Mammary epithelial cell (primary cell): ENCODE measurements at regions of chr3 and their contacts with region 1.

Region 1: DNA sequence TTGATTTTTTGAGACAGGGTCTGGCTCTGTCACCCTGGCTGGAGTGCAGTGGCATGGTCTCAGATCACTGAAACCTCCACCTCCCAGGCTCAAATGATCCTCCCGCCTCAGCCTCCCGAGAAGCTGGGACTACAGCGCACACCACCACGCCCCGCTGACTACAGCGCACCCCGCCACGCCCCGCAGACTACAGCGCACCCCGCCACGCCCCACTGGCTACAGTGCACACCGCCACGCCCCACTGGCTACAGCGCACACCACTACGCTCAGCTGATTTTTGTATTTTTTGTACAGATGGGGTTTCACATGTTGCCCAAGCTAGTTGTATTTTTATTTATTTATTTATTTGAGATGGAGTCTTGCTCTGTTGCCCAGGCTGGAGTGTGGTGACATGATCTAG is 35.6 kb downstream of the SLC51A start:
- DNase-seq: no peak
- H3K4me3 ChIP-seq: no peak overlapping the region
- H3K27ac ChIP-seq: no peak overlapping the region
- H3K4me1 ChIP-seq: no peaks in the 10 kb centered on the region
- H3K27me3 ChIP-seq: no peaks in the 10 kb centered on the region
- CTCF ChIP-seq: no peak

Region 2: DNA sequence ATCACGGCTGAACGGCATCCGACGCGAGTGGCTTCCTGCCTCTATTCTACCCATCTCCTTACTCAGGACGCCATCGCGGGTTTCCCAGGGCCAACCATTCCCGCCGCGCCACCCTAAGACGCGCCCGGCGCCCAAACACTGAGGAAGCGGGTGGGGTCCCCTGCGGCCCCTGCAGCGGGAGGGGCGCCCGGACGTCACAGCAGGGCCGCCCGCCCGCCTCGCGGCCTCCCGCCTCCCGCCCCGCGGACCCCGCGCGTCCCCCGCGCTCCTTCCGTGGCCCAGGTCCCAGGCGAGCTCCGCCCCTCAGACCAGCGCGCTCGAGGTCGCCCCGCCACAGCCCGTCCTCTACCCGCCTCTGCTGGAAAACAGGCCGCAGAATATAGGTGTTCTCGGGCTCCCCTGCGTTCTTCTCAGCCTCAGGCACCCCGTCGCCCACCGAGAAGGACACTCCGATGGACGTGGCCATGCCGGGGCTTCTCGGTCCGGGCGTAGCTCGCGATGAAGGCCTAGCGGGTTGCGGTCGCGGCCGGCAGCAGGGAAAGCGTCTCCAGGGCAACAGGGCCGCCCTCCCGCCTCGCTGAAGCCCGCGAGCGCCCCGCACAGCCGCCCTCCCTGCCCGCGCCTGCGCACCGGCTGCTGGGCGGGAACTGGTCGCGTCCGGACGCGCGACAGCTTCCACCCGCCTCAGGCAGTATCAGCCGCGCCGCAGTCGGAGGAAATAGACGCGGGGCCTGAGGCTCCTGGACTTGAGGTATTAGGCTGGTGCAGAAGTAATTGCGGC is 66.0 kb after region 1 on chr3 and contains the start of gene DYNLT2B:
- CTCF ChIA-PET with region 1: no interaction called
- dilution Hi-C with region 1: no loop called
- in situ Hi-C with region 1: no loop called
- intact Hi-C with region 1: loop called (anchors 10 kb)
- DNase-seq: peak; percentile 91
- H3K4me3 ChIP-seq: peak within 1 kb of the TSS; percentile 63 to 99 (median 87)
- H3K27ac ChIP-seq: peak within 1 kb of the TSS; percentile 79
- H3K4me1 ChIP-seq: peaks cover 28% of the 10 kb centered on the region
- H3K27me3 ChIP-seq: no peaks in the 10 kb centered on the region
- CTCF ChIP-seq: peak in 1 of 2 donors; percentile 9
- total RNA-seq, gene DYNLT2B: 10.3 to 17.3 TPM

Region 3: DNA sequence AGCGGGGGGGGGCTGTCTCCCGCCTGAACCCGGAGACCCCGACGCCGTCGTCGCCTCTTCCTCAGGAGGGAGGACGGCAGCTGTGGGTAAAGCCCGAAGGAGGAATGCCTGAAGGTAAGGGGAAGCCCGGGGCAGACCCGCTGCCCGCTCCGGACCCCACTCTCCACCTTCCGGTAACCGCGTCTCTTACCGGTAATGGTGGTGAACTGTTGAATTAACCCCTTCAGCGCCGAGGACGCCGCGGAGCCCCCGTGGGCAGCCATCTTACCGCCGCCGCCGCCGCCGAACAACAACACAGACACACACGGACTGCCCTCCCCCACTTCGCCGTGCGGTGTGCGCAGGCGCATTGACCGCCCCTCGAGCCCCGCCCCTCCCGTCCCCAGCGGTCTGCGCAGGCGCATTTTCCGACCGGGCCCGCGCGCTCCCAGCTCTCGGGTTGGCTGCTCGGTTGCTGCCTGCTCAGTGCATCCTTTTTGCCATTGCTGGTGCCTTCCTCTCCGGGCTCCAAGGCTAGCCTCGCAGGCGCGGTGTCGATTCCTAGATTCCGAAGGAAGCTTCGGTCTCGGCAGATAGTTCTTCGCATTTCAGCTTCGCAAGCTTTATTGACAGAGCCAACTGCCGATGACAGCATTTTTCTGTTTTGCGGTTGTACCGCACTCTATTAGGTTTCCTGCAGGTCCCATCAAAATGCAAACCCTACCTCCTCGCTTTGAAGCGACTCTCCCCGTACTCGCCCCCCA is 180.4 kb after region 1 on chr3 and contains the start of gene UBXN7:
- CTCF ChIA-PET with region 1: no interaction called
- dilution Hi-C with region 1: no loop called
- in situ Hi-C with region 1: no loop called
- intact Hi-C with region 1: loop called (anchors 1 kb)
- DNase-seq: peak; percentile 94
- H3K4me3 ChIP-seq: peak within 1 kb of the TSS; percentile 86 to 99 (median 91)
- H3K27ac ChIP-seq: peak within 1 kb of the TSS; percentile 82
- H3K4me1 ChIP-seq: peaks cover 11% of the 10 kb centered on the region
- H3K27me3 ChIP-seq: no peaks in the 10 kb centered on the region
- CTCF ChIP-seq: no peak
- total RNA-seq, gene UBXN7: 17.7 to 57.3 TPM

Region 4: GRCh38 chr3:196518966-196519717 is 267.2 kb after region 1 on chr3:
- CTCF ChIA-PET with region 1: no interaction called
- dilution Hi-C with region 1: no loop called
- in situ Hi-C with region 1: loop called (anchors 10 kb)
- intact Hi-C with region 1: loop called (anchors 1 kb)
- DNase-seq: peak; percentile 63
- H3K4me3 ChIP-seq: no peak overlapping the region
- H3K27ac ChIP-seq: no peak overlapping the region
- H3K4me1 ChIP-seq: no peaks in the 10 kb centered on the region
- H3K27me3 ChIP-seq: no peaks in the 10 kb centered on the region
- CTCF ChIP-seq: peak; percentile 54 to 66